Heart right ventricle (tissue), 16 donors: ENCODE measurements at regions of chr2 and their contacts with region 1.

Region 1: GRCh38 chr2:109318150-109318948 is 189.3 kb downstream of the SH3RF3 start:
- DNase-seq: peak; percentile 62 to 85
- ATAC-seq: peak; percentile 53 to 79 (median 64)
- H3K4me3 ChIP-seq: peak overlapping the region in 5 of 10 donors; percentile 2 to 21 (median 17)
- H3K27ac ChIP-seq: peak overlapping the region; percentile 33 to 85 (median 63)
- H3K4me1 ChIP-seq: peaks cover 7 to 68% (median 53%) of the 10 kb centered on the region in 9 donors
- H3K27me3 ChIP-seq: no peaks in the 10 kb centered on the region
- CTCF ChIP-seq: peak in 6 of 9 donors; percentile 4 to 43 (median 25)

Region 2: GRCh38 chr2:109155553-109156451 is 162.5 kb before region 1 on chr2:
- intact Hi-C with region 1: no loop called
- DNase-seq: no peak
- ATAC-seq: peak in 7 of 8 donors; percentile 49 to 83 (median 69)
- H3K4me3 ChIP-seq: no peak overlapping the region
- H3K27ac ChIP-seq: no peak overlapping the region
- H3K4me1 ChIP-seq: peaks cover 0 to 25% (median 10%) of the 10 kb centered on the region in 9 donors
- H3K27me3 ChIP-seq: no peaks in the 10 kb centered on the region
- CTCF ChIP-seq: no peak

Region 3: DNA sequence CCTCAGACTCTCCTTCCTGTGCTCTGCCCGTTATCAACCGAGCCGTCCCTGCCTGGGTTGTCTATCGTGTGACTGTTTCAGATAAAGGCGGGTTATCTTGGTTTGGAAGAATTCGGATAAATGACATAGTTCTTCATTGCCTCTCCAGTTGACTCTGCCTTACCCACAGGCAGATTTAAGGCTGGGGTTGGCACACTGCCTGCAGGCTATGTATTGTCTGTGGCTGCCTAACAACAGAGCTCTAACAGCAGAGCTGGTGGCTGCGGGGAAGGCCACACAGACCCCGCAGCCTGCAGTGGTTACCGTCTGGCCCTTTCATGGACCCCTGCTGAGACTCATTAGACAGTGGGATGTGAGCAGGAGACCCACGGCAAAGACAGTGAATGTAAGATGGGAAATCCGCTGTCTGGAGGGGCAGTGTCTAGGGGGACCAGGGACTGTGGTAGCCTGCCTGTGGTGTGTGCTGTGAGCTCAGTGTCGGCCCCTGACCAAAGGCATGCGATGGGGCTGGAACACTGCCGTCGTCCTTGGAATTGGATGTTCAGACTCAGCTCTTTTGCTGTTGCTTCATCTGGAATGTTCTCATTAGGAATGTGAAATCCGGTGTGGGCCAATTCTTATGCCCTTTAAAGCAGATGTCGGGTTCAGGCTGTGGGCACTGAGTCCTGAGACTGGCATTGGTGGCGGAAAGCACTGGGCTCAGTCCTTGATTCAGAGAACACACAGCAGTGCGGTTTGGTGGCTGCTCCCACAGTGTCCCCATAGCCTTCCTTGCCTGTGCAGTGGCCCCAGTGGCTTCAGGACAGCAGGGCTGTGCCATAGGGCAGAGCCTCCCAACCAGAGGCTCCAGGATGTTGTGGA is 144.8 kb before region 1 on chr2:
- intact Hi-C with region 1: loop called in 1 of 10 experiments (anchors 10 kb)
- DNase-seq: peak; percentile 70 to 72
- ATAC-seq: peak; percentile 60 to 91 (median 84)
- H3K4me3 ChIP-seq: no peak overlapping the region
- H3K27ac ChIP-seq: peak overlapping the region; percentile 71 to 87 (median 80)
- H3K4me1 ChIP-seq: peaks cover 12 to 70% (median 53%) of the 10 kb centered on the region in 9 donors
- H3K27me3 ChIP-seq: no peaks in the 10 kb centered on the region
- CTCF ChIP-seq: no peak

Region 4: GRCh38 chr2:109254174-109254904 is 64.0 kb before region 1 on chr2:
- intact Hi-C with region 1: loop called in 2 of 10 experiments (anchors 1 to 10 kb)
- DNase-seq: no peak
- ATAC-seq: peak in 1 of 8 donors; percentile 28
- H3K4me3 ChIP-seq: no peak overlapping the region
- H3K27ac ChIP-seq: no peak overlapping the region
- H3K4me1 ChIP-seq: peaks cover 8 to 48% (median 35%) of the 10 kb centered on the region in 9 donors
- H3K27me3 ChIP-seq: no peaks in the 10 kb centered on the region
- CTCF ChIP-seq: no peak

Region 5: DNA sequence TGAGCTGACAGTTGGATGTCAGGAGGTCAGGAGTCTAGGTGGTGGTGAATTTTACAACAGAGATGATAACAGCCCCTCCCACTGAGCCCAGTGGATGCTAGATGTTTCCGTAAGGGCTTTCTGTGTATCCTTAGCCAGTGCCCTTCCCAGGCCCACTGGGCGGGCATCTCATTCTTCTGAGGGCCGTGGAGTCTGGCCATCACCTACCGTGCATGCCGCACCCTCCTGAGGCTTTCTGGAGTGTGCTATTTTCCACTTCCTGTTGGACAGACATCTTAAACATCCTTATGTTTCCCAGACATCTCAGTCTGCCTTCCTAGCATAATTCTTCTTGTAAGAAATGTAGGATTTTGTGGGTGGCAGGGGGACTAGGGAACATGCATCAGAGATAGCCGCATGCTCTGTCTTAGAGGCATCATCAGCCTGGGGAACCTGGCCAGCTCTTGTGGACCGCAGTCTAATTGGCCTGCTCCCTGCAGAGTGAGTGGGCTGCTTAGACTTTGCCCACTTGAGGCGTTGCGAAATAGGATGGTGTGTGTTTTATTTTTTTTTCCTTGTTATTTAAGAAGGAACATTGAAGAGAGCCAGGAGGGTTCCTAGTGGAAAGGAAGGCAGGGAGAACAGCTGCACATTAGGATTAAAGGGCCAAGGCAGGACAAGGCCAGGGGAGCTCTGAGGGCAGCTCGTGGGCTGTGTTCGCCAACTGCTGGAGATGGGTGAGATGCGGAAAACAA is 53.6 kb before region 1 on chr2:
- intact Hi-C with region 1: no loop called
- DNase-seq: no peak
- ATAC-seq: peak in 3 of 8 donors; percentile 24 to 39 (median 37)
- H3K4me3 ChIP-seq: no peak overlapping the region
- H3K27ac ChIP-seq: no peak overlapping the region
- H3K4me1 ChIP-seq: peaks cover 7 to 60% (median 32%) of the 10 kb centered on the region in 9 donors
- H3K27me3 ChIP-seq: no peaks in the 10 kb centered on the region
- CTCF ChIP-seq: no peak

Region 6: DNA sequence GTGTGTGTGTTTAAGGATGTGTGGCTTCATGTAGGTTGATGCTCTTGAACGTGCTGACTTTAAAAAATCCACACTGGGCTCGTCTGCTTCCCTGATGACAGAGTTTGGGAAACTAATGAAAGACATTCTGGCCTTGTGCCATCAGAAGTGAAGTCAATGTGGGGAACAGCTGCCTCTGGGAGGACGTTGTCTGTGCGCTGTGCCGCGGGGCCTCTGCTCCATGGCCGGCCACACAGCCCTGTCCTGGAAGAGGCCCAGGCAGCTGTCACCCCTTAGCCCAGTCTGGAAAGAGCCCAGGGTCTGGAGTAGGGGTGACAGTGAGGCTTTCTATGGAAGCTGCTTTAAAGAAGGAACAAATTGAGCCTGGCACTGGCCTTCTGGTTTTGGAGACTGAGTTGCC is 33.5 kb before region 1 on chr2:
- intact Hi-C with region 1: loop called in 1 of 10 experiments (anchors 5 kb)
- DNase-seq: peak; percentile 63 to 69
- ATAC-seq: peak; percentile 78 to 90 (median 82)
- H3K4me3 ChIP-seq: no peak overlapping the region
- H3K27ac ChIP-seq: peak overlapping the region in 4 of 10 donors; percentile 3 to 44 (median 28)
- H3K4me1 ChIP-seq: peaks cover 14 to 65% (median 42%) of the 10 kb centered on the region in 9 donors
- H3K27me3 ChIP-seq: no peaks in the 10 kb centered on the region
- CTCF ChIP-seq: no peak

Region 7: GRCh38 chr2:109331896-109332848 is 13.8 kb after region 1 on chr2:
- intact Hi-C with region 1: no loop called
- DNase-seq: peak; percentile 63 to 65
- ATAC-seq: peak; percentile 82 to 95 (median 92)
- H3K4me3 ChIP-seq: peak overlapping the region in 7 of 10 donors; percentile 8 to 40 (median 26)
- H3K27ac ChIP-seq: peak overlapping the region in 8 of 10 donors; percentile 20 to 77 (median 62)
- H3K4me1 ChIP-seq: peaks cover 6 to 59% (median 29%) of the 10 kb centered on the region in 9 donors
- H3K27me3 ChIP-seq: peaks cover 0 to 6% (median 0%) of the 10 kb centered on the region in 7 donors
- CTCF ChIP-seq: no peak

Region 8: DNA sequence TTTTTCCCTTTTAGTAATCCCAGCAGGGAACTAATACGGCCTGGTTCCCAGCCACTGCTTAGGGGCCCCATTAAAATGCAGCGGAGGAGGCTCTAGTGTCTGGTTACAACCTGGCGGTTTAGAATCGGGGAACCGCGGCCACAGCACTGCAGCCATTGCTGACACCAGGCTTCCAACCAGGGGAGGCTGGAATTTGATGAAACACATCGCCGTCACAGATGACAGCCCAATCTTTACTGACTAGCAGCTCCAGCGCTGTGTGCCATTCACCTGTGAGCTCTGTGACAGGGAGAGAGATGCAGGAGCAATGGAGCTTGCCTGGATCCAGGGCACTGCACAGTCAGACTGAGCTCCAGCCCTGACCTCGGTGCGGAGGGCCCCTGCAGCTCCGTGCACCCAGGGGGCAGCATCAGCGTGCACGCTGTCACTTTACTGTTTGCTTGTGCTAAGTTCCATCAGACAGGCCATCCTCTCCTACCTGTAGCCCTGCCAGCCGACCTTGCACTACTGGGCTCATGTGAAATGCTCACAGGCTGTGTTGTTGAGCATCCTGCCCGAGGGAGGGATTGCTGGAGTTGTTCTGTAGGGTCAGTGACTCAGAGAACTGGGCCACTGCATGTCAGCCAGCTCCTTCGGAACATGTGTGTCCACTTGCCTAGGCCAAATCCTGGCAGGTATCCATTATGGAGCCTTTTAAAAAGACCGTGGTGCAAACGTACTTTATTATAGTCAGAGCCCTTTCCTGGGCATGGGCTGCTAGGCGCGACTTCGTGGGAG is 91.9 kb after region 1 on chr2:
- intact Hi-C with region 1: no loop called
- DNase-seq: no peak
- ATAC-seq: peak in 2 of 8 donors; percentile 18 to 48
- H3K4me3 ChIP-seq: no peak overlapping the region
- H3K27ac ChIP-seq: no peak overlapping the region
- H3K4me1 ChIP-seq: peaks cover 0 to 9% (median 0%) of the 10 kb centered on the region in 9 donors
- H3K27me3 ChIP-seq: no peaks in the 10 kb centered on the region
- CTCF ChIP-seq: no peak

Region 9: GRCh38 chr2:109429233-109430095 is 111.1 kb after region 1 on chr2:
- intact Hi-C with region 1: loop called in 1 of 10 experiments (anchors 5 kb)
- DNase-seq: no peak
- ATAC-seq: peak in 1 of 8 donors; percentile 8
- H3K4me3 ChIP-seq: no peak overlapping the region
- H3K27ac ChIP-seq: no peak overlapping the region
- H3K4me1 ChIP-seq: no peaks in the 10 kb centered on the region
- H3K27me3 ChIP-seq: no peaks in the 10 kb centered on the region
- CTCF ChIP-seq: no peak